GM12878 (cell line): ENCODE measurements at regions of chr10 and their contacts with region 1.

Region 1: GRCh38 chr10:37976091-37976879 is at the start of gene ZNF25:
- DNase-seq: peak; percentile 99
- ATAC-seq: peak; percentile 98
- H3K4me3 ChIP-seq: peak within 1 kb of the TSS; percentile 76
- H3K27ac ChIP-seq: peak within 1 kb of the TSS; percentile 90
- H3K4me1 ChIP-seq: no peaks in the 10 kb centered on the region
- H3K27me3 ChIP-seq: no peaks in the 10 kb centered on the region
- CTCF ChIP-seq: peak; percentile 91 to 99 (median 95)
- EP300 ChIP-seq: 0 out of 4 replicates have a peak, but pooled peaks of 1 of the 2 experiments have one; percentile 16
- POLR2A ChIP-seq: peak; percentile 93
- RAD21 ChIP-seq: peak; percentile 76
- polyA plus RNA-seq, gene ZNF25: 1.0 to 1.5 TPM

Region 2: GRCh38 chr10:37844644-37845043 is 131.6 kb before region 1 on chr10:
- CTCF ChIA-PET with region 1: no interaction called
- POLR2A ChIA-PET with region 1: no interaction called
- RAD21 ChIA-PET with region 1: no interaction called
- SMC1A ChIA-PET with region 1: no interaction called
- in situ Hi-C with region 1: no loop called
- intact Hi-C with region 1: no loop called
- DNase-seq: no peak
- ATAC-seq: no peak
- H3K4me3 ChIP-seq: no peak overlapping the region
- H3K27ac ChIP-seq: no peak overlapping the region
- H3K4me1 ChIP-seq: no peaks in the 10 kb centered on the region
- H3K27me3 ChIP-seq: no peaks in the 10 kb centered on the region
- CTCF ChIP-seq: no peak
- EP300 ChIP-seq: no peak
- POLR2A ChIP-seq: no peak
- RAD21 ChIP-seq: no peak

Region 3: GRCh38 chr10:37857287-37858211 is 118.7 kb before region 1 on chr10 and contains the start of gene ZNF248:
- CTCF ChIA-PET with region 1: interaction called, 3 read pairs
- POLR2A ChIA-PET with region 1: interaction called, 3 read pairs
- RAD21 ChIA-PET with region 1: interaction called, 4 read pairs
- SMC1A ChIA-PET with region 1: interaction called, 4 read pairs
- in situ Hi-C with region 1: loop called (anchors 10 kb)
- intact Hi-C with region 1: loop called (anchors 2 kb)
- DNase-seq: peak; percentile 89
- ATAC-seq: peak; percentile 95
- H3K4me3 ChIP-seq: peak within 1 kb of the TSS; percentile 82
- H3K27ac ChIP-seq: peak within 1 kb of the TSS; percentile 78
- H3K4me1 ChIP-seq: no peaks in the 10 kb centered on the region; the same call in 1 of the 2 replicates
- H3K27me3 ChIP-seq: no peaks in the 10 kb centered on the region
- CTCF ChIP-seq: no peak
- EP300 ChIP-seq: no peak
- POLR2A ChIP-seq: peak; percentile 100
- RAD21 ChIP-seq: no peak
- polyA plus RNA-seq, gene ZNF248: 2.0 to 4.9 TPM

Region 4: GRCh38 chr10:37960591-37961137 is 15.6 kb before region 1 on chr10:
- CTCF ChIA-PET with region 1: interaction called, 3 read pairs
- POLR2A ChIA-PET with region 1: interaction called, 10 read pairs
- RAD21 ChIA-PET with region 1: no interaction called
- SMC1A ChIA-PET with region 1: interaction called, 5 read pairs
- in situ Hi-C with region 1: no loop called
- intact Hi-C with region 1: no loop called
- DNase-seq: no peak
- ATAC-seq: no peak
- H3K4me3 ChIP-seq: no peak overlapping the region
- H3K27ac ChIP-seq: no peak overlapping the region
- H3K4me1 ChIP-seq: no peaks in the 10 kb centered on the region
- H3K27me3 ChIP-seq: no peaks in the 10 kb centered on the region
- CTCF ChIP-seq: no peak
- EP300 ChIP-seq: no peak
- POLR2A ChIP-seq: no peak
- RAD21 ChIP-seq: no peak

Region 5: GRCh38 chr10:38010119-38010903 is 34.0 kb after region 1 on chr10 and contains the start of gene ZNF33A:
- CTCF ChIA-PET with region 1: interaction called, 7 read pairs
- POLR2A ChIA-PET with region 1: interaction called, 14 read pairs
- RAD21 ChIA-PET with region 1: interaction called, 12 read pairs
- SMC1A ChIA-PET with region 1: interaction called, 9 read pairs
- in situ Hi-C with region 1: no loop called
- intact Hi-C with region 1: loop called (anchors 1 kb)
- DNase-seq: peak; percentile 85
- ATAC-seq: peak; percentile 95
- H3K4me3 ChIP-seq: peak within 1 kb of the TSS; percentile 83
- H3K27ac ChIP-seq: peak within 1 kb of the TSS; percentile 88
- H3K4me1 ChIP-seq: no peaks in the 10 kb centered on the region
- H3K27me3 ChIP-seq: no peaks in the 10 kb centered on the region
- CTCF ChIP-seq: 0 out of 6 replicates have a peak, but pooled peaks of 1 of the 3 experiments have one; percentile 10
- EP300 ChIP-seq: peak in 1 of 2 experiments; percentile 39; a peak in 1 of 4 replicates
- POLR2A ChIP-seq: no peak
- RAD21 ChIP-seq: no peak
- polyA plus RNA-seq, gene ZNF33A: 9.8 to 12.1 TPM

Region 6: DNA sequence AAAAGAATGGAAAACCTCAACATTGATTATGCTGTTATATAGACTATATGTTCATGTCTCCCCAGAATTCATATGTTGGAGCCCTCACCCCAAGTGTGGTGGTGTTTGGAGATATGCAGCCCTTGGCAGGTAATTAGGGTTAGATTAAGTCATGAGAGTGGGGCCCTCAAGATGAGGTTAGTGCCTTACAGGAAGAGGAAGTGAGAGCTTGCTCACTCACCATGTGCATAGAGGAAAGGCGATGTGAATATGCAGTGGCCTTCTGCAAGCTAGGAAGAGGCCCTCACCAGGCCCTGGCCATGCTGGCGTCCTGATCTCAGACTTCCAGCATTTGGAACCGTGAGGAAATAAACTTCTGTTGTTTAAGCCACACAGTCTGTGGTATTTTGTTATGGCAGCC is 49.0 kb after region 1 on chr10:
- CTCF ChIA-PET with region 1: interaction called, 4 read pairs
- POLR2A ChIA-PET with region 1: no interaction called
- RAD21 ChIA-PET with region 1: interaction called, 5 read pairs
- SMC1A ChIA-PET with region 1: no interaction called
- in situ Hi-C with region 1: no loop called
- intact Hi-C with region 1: loop called (anchors 5 kb)
- DNase-seq: no peak
- ATAC-seq: peak; percentile 97
- H3K4me3 ChIP-seq: no peak overlapping the region
- H3K27ac ChIP-seq: peak overlapping the region; percentile 42
- H3K4me1 ChIP-seq: peaks cover 23% of the 10 kb centered on the region
- H3K27me3 ChIP-seq: no peaks in the 10 kb centered on the region
- CTCF ChIP-seq: no peak
- EP300 ChIP-seq: no peak
- POLR2A ChIP-seq: peak; percentile 30; the same call in 1 of the 2 replicates
- RAD21 ChIP-seq: no peak

Region 7: GRCh38 chr10:38094158-38094920 is 118.1 kb after region 1 on chr10 and contains the start of gene ZNF37A:
- CTCF ChIA-PET with region 1: interaction called, 7 read pairs
- POLR2A ChIA-PET with region 1: interaction called, 3 read pairs
- RAD21 ChIA-PET with region 1: interaction called, 8 read pairs
- SMC1A ChIA-PET with region 1: interaction called, 5 read pairs
- in situ Hi-C with region 1: no loop called
- intact Hi-C with region 1: loop called (anchors 1 kb)
- DNase-seq: peak; percentile 83
- ATAC-seq: peak; percentile 99
- H3K4me3 ChIP-seq: peak within 1 kb of the TSS; percentile 79
- H3K27ac ChIP-seq: peak within 1 kb of the TSS; percentile 77
- H3K4me1 ChIP-seq: peaks cover 9% of the 10 kb centered on the region; the same call in 1 of the 2 replicates
- H3K27me3 ChIP-seq: no peaks in the 10 kb centered on the region
- CTCF ChIP-seq: no peak
- EP300 ChIP-seq: no peak
- POLR2A ChIP-seq: peak; percentile 69
- RAD21 ChIP-seq: no peak
- polyA plus RNA-seq, gene ZNF37A: 3.3 to 5.1 TPM

Region 8: GRCh38 chr10:38600696-38601095 is 624.4 kb after region 1 on chr10:
- CTCF ChIA-PET with region 1: no interaction called
- POLR2A ChIA-PET with region 1: no interaction called
- RAD21 ChIA-PET with region 1: no interaction called
- SMC1A ChIA-PET with region 1: no interaction called
- in situ Hi-C with region 1: no loop called
- intact Hi-C with region 1: no loop called
- DNase-seq: no peak
- ATAC-seq: no peak
- H3K4me3 ChIP-seq: no peak overlapping the region
- H3K27ac ChIP-seq: no peak overlapping the region
- H3K4me1 ChIP-seq: no peaks in the 10 kb centered on the region
- H3K27me3 ChIP-seq: no peaks in the 10 kb centered on the region
- CTCF ChIP-seq: no peak
- EP300 ChIP-seq: no peak
- POLR2A ChIP-seq: no peak
- RAD21 ChIP-seq: no peak